ENCODE measurements at regions of chr15 and their contacts with region 1.

Region 1: GRCh38 chr15:40274350-40275274 is 8.3 kb downstream of the ANKRD63 start:
- DNase-seq: peak; percentile 58
- H3K4me3 ChIP-seq: no peak overlapping the region
- H3K27ac ChIP-seq: no peak overlapping the region
- H3K27me3 ChIP-seq: peaks cover 32% of the 10 kb centered on the region
- CTCF ChIP-seq: peak; percentile 100

Region 2: GRCh38 chr15:40108855-40109735 is 165.5 kb before region 1 on chr15 and contains the start of gene BMF:
- CTCF ChIA-PET with region 1: interaction called, 13 read pairs
- POLR2A ChIA-PET with region 1: interaction called, 3 read pairs
- DNase-seq: peak; percentile 98
- H3K4me3 ChIP-seq: peak within 1 kb of the TSS; percentile 84
- H3K27ac ChIP-seq: peak within 1 kb of the TSS; percentile 39
- H3K27me3 ChIP-seq: peaks cover 27% of the 10 kb centered on the region
- CTCF ChIP-seq: peak; percentile 43; the same call in 1 of the 2 replicates
- polyA plus RNA-seq, gene BMF: 6.2 and 6.5 TPM in 2 replicates

Region 3: GRCh38 chr15:40217159-40217824 is 57.3 kb before region 1 on chr15:
- CTCF ChIA-PET with region 1: interaction called, 670 read pairs
- POLR2A ChIA-PET with region 1: interaction called, 3 read pairs
- DNase-seq: peak; percentile 32
- H3K4me3 ChIP-seq: no peak overlapping the region
- H3K27ac ChIP-seq: no peak overlapping the region
- H3K27me3 ChIP-seq: no peaks in the 10 kb centered on the region
- CTCF ChIP-seq: peak; percentile 82

Region 4: GRCh38 chr15:40249482-40250303 is 24.9 kb before region 1 on chr15:
- CTCF ChIA-PET with region 1: interaction called, 19 read pairs
- POLR2A ChIA-PET with region 1: no interaction called
- DNase-seq: no peak
- H3K4me3 ChIP-seq: no peak overlapping the region
- H3K27ac ChIP-seq: no peak overlapping the region
- H3K27me3 ChIP-seq: peaks cover 66% of the 10 kb centered on the region
- CTCF ChIP-seq: no peak

Region 5: DNA sequence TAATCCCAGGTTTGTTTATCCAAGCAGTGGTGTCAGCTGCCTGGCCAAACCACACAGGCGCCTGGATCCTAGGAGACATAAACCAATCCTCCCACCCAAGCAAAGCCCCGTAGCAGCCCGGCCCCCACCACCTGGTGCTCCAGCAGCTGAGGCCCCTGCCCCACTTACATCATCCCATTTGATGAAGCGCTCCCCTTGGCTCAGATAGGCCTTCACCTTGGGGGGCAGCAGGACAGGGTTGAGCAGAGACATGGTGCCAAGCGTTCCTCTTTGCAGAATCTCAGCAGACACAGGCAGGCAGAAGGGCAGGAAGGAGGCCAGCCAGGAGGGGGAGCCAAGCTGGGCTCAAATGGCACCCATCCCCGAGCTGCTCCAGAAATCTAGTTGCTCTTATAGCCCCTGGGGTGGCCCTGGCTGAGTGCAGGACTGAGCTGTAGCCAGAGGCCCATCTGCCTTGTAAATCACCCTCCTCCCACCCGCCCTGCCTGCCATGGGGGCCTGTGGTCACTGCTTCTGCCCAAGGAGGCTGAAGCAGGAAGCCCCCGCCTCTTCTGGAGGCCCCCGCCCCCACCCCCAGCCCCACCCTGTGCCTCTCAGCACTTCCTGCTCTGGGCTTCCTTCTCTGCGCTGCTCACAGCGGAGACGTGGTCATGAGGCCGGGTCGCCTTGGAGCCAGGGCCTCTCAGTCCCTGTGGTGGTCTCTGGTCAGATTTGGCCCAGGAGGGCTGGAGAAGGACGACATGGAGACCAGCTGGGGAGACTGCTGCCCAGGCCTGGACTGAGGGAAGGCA is 33.0 kb after region 1 on chr15 and contains the start of gene PLCB2:
- CTCF ChIA-PET with region 1: interaction called, 49 read pairs
- POLR2A ChIA-PET with region 1: no interaction called
- DNase-seq: no peak
- H3K4me3 ChIP-seq: no peak within 1 kb of the TSS
- H3K27ac ChIP-seq: no peak within 1 kb of the TSS
- H3K27me3 ChIP-seq: peaks cover 63% of the 10 kb centered on the region
- CTCF ChIP-seq: peak; percentile 44
- polyA plus RNA-seq, gene PLCB2: 0.24 and 0.32 TPM in 2 replicates

Measured in AG04450 (cell line).